ENCODE measurements at regions of chr10 and their contacts with region 1.

Region 1: DNA sequence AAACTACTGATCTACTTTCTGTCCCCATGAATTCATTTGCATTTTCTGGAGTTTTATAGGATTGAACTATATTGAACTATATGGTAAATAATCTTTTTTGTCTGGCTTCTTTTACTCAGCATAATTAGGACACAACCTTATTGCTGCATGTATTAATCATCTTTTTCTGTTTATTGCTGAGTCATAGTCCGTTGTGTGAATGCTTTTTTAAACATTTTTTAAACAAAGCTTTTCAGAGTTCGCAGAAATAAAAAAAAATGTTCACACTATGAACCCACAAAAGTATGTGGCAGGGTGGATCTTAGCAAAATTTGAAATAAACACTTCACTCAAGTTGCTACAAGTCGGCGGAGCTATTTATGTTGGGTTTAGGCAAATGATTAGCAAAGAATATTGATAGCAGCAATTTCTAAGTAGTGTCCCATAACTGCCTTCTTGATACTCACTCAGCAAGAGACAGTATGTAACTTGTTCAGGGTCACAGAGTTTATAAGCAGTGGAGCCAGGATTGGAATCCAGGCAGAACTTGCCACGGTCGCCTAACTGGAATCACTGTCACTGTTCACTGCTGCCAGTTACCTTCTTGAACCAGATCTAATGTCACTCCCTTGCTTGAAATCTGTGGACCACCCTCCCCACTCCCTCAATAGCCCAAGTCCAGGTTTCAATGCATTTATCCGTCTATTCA is 5.6 kb downstream of the CH25H start:
- DNase-seq: no peak
- H3K4me3 ChIP-seq: no peak overlapping the region
- H3K4me3 Mint-ChIP-seq: no peak overlapping the region
- H3K27ac ChIP-seq: no peak overlapping the region
- H3K27ac Mint-ChIP-seq: no peak overlapping the region
- H3K4me1 ChIP-seq: peaks cover 4% of the 10 kb centered on the region
- H3K4me1 Mint-ChIP-seq: peaks cover 3 to 5% (median 4%) of the 10 kb centered on the region in 3 donors
- H3K27me3 ChIP-seq: no peaks in the 10 kb centered on the region
- H3K27me3 Mint-ChIP-seq: peaks cover 8 to 15% of the 10 kb centered on the region in 2 donors

Region 2: DNA sequence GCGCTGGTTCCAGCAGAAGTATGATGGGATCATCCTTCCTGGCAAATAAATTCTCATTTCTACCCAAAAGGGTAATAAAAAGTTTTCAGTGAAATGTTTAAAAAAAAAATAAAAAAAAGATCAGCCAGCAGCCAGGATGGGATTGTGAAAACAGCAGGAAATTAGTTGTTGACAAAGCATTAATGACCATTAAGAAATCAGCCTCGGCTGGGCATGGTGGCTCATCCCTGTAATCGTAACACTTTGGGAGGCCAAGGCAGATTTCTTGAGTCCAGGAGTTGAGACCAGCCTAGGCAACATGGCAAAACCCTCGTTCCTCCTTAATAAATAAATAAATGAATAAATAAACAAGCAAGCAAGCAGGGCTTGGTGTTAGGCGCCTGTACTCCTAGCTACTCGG is 1255.5 kb before region 1 on chr10:
- CTCF ChIA-PET with region 1: no interaction called
- POLR2A ChIA-PET with region 1: interaction called, 12 read pairs
- DNase-seq: no peak
- H3K4me3 ChIP-seq: no peak overlapping the region
- H3K4me3 Mint-ChIP-seq: no peak overlapping the region
- H3K27ac ChIP-seq: no peak overlapping the region
- H3K27ac Mint-ChIP-seq: peak overlapping the region in 1 of 8 donors; percentile 13
- H3K4me1 ChIP-seq: no peaks in the 10 kb centered on the region
- H3K4me1 Mint-ChIP-seq: peaks cover 13 to 27% (median 25%) of the 10 kb centered on the region in 3 donors
- H3K27me3 ChIP-seq: no peaks in the 10 kb centered on the region
- H3K27me3 Mint-ChIP-seq: no peaks in the 10 kb centered on the region

Region 3: DNA sequence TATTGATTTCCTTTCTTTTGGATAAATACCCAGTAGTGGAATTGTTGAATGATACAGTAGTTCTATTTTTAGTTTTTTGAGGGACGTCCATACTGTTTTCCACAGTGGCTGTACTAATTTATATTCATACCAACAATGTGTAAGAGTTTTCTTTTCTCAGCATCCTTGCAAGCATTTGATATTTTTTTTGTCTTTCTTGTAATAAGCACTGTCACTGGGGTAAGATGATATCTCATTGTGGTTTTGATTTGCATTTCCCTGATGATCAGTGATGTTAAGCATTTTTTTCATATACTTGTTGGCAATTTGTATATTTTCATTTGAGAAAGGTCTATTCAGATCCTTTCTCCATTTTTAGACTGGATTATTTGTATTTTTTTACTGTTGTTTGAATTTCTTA is 1029.3 kb before region 1 on chr10:
- CTCF ChIA-PET with region 1: no interaction called
- POLR2A ChIA-PET with region 1: no interaction called
- DNase-seq: no peak
- H3K4me3 ChIP-seq: no peak overlapping the region
- H3K4me3 Mint-ChIP-seq: no peak overlapping the region
- H3K27ac ChIP-seq: no peak overlapping the region
- H3K27ac Mint-ChIP-seq: no peak overlapping the region
- H3K4me1 ChIP-seq: peaks cover 17% of the 10 kb centered on the region
- H3K4me1 Mint-ChIP-seq: peaks cover 21 to 36% (median 32%) of the 10 kb centered on the region in 3 donors
- H3K27me3 ChIP-seq: no peaks in the 10 kb centered on the region
- H3K27me3 Mint-ChIP-seq: no peaks in the 10 kb centered on the region